Mammary epithelial cell (primary cell): ENCODE measurements at regions of chr9 and their contacts with region 1.

Region 1: GRCh38 chr9:107090218-107090617 is 192.9 kb upstream of the RAD23B start:
- DNase-seq: no peak
- H3K4me3 ChIP-seq: no peak overlapping the region
- H3K27ac ChIP-seq: no peak overlapping the region
- H3K4me1 ChIP-seq: no peaks in the 10 kb centered on the region
- H3K27me3 ChIP-seq: peaks cover 5% of the 10 kb centered on the region
- CTCF ChIP-seq: no peak

Region 2: GRCh38 chr9:107127602-107128001 is 37.4 kb after region 1 on chr9:
- CTCF ChIA-PET with region 1: no interaction called
- dilution Hi-C with region 1: loop called (anchors 5 kb)
- in situ Hi-C with region 1: no loop called
- intact Hi-C with region 1: no loop called
- DNase-seq: no peak
- H3K4me3 ChIP-seq: no peak overlapping the region
- H3K27ac ChIP-seq: no peak overlapping the region
- H3K4me1 ChIP-seq: peaks cover 8% of the 10 kb centered on the region
- H3K27me3 ChIP-seq: no peaks in the 10 kb centered on the region
- CTCF ChIP-seq: no peak

Region 3: DNA sequence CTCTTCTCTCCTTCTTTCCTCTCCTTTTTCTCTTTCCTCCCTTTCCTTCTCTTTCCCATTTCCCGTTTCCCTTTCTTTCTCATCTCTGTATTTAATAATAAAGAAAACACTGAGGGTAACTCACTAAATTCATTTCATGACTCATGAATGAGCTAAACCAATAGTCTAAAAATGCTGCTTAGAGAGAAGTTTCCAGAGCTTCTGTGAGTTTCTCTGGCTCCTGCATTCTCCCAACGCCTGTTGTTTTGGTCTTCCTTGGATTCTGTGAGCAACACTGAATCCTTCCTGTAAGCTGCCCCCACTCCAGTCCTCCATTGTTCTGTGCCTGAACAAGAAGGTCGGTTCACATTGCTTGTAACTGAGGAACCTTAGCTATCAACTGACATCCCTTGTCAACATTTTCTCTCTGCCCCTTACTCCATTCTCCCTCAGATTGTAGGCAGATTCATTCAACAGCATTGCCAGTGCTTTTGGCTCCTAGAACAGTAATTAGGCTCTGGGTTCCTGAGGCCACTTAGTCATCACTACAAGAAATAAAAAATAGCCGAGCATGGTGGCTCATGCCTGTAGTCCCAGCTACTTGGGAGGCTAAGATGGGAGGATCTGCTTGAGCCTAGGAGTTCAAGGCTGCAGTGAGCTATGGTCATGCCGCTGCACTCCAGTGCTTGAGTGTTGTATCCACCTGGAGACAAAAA is 637.0 kb after region 1 on chr9:
- CTCF ChIA-PET with region 1: no interaction called
- dilution Hi-C with region 1: no loop called
- in situ Hi-C with region 1: no loop called
- intact Hi-C with region 1: no loop called
- DNase-seq: no peak
- H3K4me3 ChIP-seq: no peak overlapping the region
- H3K27ac ChIP-seq: no peak overlapping the region
- H3K4me1 ChIP-seq: no peaks in the 10 kb centered on the region
- H3K27me3 ChIP-seq: no peaks in the 10 kb centered on the region
- CTCF ChIP-seq: no peak